Sciatic nerve (tissue), 2 donors: ENCODE measurements at regions of chr5 and their contacts with region 1.

Region 1: DNA sequence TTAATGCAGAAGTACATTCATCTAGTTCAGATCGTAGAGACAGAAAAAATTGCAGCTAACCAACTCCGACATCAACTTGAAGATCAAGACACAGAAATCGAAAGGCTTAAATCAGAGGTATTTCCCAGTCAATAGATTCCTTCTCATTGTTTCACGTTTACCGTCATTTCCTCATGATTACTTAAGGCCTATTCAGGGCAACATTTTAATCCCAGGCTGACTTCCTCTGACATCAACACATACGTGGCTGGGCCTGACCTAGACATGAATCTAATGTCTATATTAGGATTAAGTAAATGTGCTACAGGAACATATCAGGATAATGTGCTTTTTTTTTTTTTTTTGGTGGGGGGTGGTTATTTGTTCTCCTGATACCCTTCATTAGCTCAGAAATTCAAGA is 107.9 kb downstream of the RASGRF2 start:
- DNase-seq: no peak
- ATAC-seq: no peak

Region 2: DNA sequence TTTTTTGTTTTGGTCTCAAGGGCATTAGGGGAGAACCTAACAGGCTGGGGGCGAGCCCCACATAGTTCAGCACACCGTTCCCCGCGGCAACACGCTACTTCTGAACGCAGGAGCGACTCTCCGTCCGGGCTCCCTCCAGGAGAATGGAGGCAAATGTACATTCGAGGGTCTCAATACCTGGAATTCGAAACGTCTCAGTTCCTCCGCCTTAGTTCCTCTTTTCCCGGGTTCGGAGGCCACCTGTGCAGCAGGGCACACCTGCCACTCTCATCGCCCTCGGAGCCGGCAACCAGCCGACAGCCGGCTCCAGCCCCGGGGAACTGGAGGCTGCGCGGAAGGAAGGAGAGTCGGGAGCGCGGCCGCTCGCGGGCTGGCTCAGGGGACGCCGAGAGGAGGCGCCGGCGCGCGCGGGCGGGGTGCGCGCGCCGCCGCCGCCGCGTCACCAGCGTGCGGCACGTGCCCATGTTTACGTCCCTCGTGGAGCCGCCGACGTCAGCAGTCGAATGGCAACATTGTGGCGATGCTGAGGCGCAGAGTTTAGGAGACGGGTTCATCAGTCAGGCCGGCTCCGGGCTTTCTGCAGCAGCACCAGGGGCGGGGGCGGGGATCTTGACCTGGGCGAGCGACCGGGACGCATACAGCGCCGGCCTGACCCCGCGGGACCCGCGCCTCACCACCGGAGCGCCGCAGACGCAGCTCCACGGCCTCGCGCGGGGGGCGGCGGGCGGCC is 1832.3 kb before region 1 on chr5 and contains the start of gene JMY:
- intact Hi-C with region 1: loop called (anchors 5 kb)
- DNase-seq: peak; percentile 90
- ATAC-seq: peak; percentile 93
- total RNA-seq, gene JMY: 20.6 TPM

Region 3: GRCh38 chr5:81225463-81225862 is 157.4 kb after region 1 on chr5:
- intact Hi-C with region 1: no loop called
- DNase-seq: no peak
- ATAC-seq: no peak